Activated CD4-positive, alpha-beta T cell treated with anti-CD3 and anti-CD28 coated beads, Interleukin-2, amount 10 ng/mL, durations not matched to agents 24 days and 14 days (primary cell): ENCODE measurements at regions of chr15 and their contacts with region 1.

Region 1: DNA sequence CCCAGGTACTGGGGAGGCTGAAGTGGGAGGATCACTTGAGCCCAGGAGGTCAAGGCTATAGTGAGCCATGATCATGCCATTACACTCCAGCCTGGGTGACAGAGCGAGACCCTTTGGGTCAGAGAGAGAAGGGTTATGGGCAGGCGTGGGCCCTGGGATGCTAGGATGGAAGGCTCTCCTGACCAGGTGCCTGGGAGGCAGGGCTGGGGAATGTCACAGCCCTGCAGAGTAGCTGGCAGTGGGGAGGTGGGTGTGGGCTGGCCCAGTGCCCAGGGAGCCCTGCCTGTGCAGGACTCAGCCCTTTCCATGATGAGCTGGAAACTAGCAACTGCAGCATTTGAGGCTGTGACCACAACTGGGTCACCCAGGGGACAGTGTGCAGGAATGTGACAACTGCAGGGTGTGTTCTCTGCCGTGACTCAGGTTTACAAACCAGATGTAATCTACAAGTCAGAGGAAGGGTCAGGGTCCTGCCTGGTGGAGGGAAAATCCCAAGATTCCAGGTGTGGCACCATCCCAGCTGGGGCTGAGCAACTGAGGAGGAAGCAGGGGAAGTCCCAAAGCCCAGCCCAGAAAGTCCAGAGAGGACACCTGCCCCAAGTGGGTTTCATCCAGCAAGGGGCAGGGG is 45.4 kb downstream of the SLC28A1 start:
- DNase-seq: no peak
- H3K4me3 Mint-ChIP-seq: no peak overlapping the region
- H3K27ac Mint-ChIP-seq: no peak overlapping the region
- H3K4me1 Mint-ChIP-seq: peaks cover 5% of the 10 kb centered on the region
- H3K27me3 Mint-ChIP-seq: peaks cover 3% of the 10 kb centered on the region

Region 2: DNA sequence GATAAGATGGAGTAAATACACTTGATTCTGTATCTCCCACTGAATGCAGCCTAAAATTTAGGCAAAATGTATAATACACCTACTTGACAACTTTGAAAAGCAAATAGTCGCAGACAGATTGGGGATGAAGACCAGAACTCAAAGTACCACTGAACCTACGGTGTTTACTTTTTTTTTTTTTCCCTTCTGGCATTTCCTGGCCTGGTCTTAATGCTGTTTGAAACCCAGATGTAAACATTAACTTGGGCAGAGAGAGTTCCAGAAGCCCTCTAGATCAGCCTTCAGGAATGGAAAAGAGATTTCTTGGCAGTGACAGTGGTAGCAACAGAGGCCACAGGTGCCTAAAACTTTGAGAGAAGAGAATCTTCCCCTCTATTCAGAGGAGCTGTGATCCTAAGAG is 84.9 kb before region 1 on chr15:
- intact Hi-C with region 1: loop called (anchors 1 kb)
- DNase-seq: no peak
- H3K4me3 Mint-ChIP-seq: no peak overlapping the region
- H3K27ac Mint-ChIP-seq: no peak overlapping the region
- H3K4me1 Mint-ChIP-seq: no peaks in the 10 kb centered on the region
- H3K27me3 Mint-ChIP-seq: peaks cover 7% of the 10 kb centered on the region

Region 3: GRCh38 chr15:84871428-84872305 is 58.2 kb before region 1 on chr15:
- intact Hi-C with region 1: loop called (anchors 10 kb)
- DNase-seq: no peak
- H3K4me3 Mint-ChIP-seq: no peak overlapping the region
- H3K27ac Mint-ChIP-seq: no peak overlapping the region
- H3K4me1 Mint-ChIP-seq: no peaks in the 10 kb centered on the region
- H3K27me3 Mint-ChIP-seq: no peaks in the 10 kb centered on the region

Region 4: DNA sequence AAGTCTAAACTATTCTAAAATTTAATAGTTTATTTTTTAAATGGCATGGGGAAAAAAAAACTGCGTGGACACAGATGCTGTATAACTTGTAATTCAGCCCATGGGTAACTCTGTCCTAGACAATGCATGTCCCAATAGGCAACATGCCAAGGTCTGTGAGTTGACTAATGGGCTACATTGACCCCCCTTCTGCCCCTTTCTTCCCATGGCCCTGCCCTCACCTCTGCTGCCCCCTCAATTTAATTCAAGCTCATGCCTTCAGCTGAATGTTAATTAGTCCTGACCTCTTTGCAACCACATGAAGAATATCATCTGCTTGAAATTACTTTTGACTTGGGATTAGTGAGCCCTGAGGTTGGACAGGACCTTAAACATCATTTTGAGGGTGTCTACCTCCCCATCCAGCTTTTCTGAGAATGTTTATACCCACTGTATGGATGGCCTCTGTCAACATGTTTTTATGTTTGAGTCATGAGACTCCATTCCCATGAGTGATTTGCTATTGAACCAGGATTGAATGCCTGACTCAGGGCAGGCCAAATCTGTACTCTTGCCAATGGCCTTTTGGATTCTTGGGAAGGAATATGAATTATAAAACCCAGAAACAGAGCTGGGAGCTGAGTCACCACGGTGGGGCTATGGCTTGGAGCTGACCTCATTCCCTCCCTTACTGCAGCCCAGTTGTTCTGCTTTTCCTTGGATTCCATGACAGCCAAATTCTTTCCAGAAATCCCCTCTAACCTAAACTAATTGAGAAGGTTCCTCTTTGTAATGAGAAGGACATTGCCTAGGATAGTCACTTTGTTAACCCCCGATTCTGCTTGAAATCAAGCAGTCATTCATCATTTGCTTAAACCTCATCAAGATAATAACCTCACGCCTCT is 18.3 kb after region 1 on chr15:
- intact Hi-C with region 1: no loop called
- DNase-seq: no peak
- H3K4me3 Mint-ChIP-seq: no peak overlapping the region
- H3K27ac Mint-ChIP-seq: no peak overlapping the region
- H3K4me1 Mint-ChIP-seq: no peaks in the 10 kb centered on the region
- H3K27me3 Mint-ChIP-seq: peaks cover 15% of the 10 kb centered on the region

Region 5: GRCh38 chr15:85142312-85142711 is 212.5 kb after region 1 on chr15:
- intact Hi-C with region 1: no loop called
- DNase-seq: no peak
- H3K4me3 Mint-ChIP-seq: no peak overlapping the region
- H3K27ac Mint-ChIP-seq: no peak overlapping the region
- H3K4me1 Mint-ChIP-seq: no peaks in the 10 kb centered on the region
- H3K27me3 Mint-ChIP-seq: no peaks in the 10 kb centered on the region